RWPE1 (cell line): ENCODE measurements at regions of chr7 and their contacts with region 1.

Region 1: DNA sequence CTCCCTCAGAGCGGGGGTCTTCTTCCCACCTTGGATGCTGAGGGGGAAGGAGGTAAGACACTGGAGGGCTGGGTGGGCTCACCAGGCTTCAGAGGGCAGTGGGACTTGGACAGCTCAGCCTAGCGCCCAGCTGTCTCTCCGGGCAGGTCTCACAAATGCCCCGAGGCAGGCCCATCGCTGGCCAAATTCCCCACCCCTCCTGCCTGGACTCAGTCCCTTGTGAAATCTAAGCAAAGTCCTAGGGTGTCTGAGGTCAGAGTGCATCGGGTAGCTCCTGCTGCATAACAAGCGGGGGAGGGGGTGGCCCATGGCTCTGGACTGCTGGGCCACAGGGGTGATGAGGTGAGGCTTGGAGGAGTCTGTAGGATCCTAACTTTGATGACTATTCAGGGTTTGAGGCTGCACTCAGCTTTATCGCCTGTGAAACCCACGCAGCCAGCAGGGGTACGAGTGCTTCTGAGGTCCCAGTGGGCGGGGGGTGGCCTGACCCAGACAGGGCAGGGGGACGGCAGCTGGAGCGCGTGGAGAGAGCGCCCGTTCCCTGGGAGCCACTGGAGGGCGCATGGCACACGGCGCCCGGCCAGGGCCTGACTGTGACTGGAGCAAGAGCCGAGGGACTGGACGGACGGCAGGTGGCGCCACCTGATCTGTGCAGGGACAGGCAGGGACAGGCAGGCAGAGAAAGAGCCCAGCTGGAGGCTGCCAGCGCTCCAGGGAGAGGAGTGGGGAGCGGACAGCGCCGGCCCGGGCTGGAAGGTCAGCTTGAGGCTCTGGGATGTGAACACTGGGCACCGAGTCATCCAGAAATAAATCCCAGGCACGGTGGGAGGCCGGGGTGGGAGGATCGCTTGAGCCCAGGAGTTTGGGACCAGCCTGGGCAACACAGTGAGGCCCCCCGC is 10.0 kb downstream of the CYP2W1 start:
- DNase-seq: peak; percentile 85
- H3K27ac ChIP-seq: peak overlapping the region; percentile 31; the same call in 1 of the 2 replicates
- CTCF ChIP-seq: peak; percentile 100

Region 2: DNA sequence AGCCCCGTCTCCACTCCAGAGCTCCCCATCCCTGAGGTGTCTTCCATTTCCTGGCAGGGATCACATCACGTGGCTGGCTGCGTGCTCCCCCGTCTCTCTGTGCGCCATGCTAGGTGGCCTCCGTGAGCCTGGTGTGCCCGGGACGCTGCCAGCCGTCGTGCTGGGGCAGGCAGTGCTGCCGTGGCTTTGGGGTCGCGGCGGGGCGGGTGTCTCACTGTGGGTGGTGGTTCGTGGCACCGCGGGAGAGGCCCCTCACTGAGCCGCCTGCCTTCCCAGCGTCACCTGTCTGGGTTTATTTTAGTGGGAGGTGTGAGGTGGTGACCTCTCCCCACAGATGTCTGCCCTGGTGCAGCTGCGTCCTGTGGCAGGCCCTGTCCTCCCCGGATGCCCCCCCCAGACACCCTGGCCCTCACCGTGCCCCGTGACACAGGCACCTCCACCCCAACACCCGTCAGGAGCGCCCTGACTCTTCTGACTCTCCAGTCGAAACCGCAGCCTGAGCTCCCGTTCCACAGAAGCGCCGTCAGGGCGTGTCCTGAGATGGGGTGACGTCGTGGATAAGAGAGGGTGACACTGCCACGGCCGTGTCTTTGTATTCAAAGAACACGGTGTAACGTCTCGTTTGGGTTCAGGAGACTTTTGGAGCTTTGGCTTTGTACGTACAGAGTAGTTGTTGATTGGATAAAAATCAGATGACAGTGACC is 98.6 kb before region 1 on chr7:
- CTCF ChIA-PET with region 1: no interaction called
- POLR2A ChIA-PET with region 1: no interaction called
- DNase-seq: no peak
- H3K27ac ChIP-seq: peak overlapping the region; percentile 4
- CTCF ChIP-seq: no peak

Region 3: DNA sequence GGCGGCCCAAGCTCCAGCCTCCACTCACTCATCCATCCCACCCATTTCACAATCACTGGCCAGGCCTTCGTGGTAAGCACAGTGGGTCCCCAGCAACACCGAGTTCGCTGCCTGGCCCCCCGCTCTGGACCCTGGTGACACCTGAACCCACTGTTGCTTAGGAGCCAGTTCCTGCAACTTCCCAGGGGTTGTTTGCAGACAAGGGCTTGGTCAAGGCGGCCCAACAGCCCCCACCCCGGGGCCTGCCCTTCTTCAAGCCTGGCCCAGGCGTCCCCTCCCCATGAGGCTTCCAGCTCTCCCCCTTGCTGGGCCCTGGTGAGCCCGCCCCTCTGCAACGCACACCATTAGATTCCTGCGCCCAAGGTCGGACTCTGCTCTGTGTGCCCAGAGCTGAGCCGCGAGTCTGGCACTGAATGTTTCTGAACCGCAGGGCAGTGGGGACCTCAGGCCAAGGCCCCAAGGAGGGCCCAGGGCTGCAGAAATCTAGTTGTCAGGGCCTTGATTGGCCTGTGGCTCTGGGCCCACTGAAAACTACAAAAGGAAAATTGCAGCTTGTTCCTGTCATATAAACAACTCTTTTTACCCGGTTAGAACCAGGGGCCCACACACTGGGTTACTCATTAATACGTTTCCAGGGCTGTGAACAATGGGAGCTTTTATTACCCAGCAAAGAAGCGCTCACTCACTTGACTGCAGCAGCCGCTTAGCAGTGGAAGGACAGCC is 15.5 kb before region 1 on chr7:
- CTCF ChIA-PET with region 1: interaction called, 15 read pairs
- POLR2A ChIA-PET with region 1: no interaction called
- DNase-seq: no peak
- H3K27ac ChIP-seq: no peak overlapping the region
- CTCF ChIP-seq: no peak

Region 4: GRCh38 chr7:1059200-1060091 is 66.5 kb after region 1 on chr7:
- CTCF ChIA-PET with region 1: interaction called, 80 read pairs
- POLR2A ChIA-PET with region 1: interaction called, 3 read pairs
- DNase-seq: no peak
- H3K27ac ChIP-seq: peak overlapping the region; percentile 49
- CTCF ChIP-seq: no peak

Region 5: GRCh38 chr7:1076181-1077072 is 83.5 kb after region 1 on chr7:
- CTCF ChIA-PET with region 1: interaction called, 10 read pairs
- POLR2A ChIA-PET with region 1: no interaction called
- DNase-seq: no peak
- H3K27ac ChIP-seq: peak overlapping the region; percentile 83
- CTCF ChIP-seq: no peak

Region 6: GRCh38 chr7:1144269-1144771 is 151.4 kb after region 1 on chr7:
- CTCF ChIA-PET with region 1: interaction called, 34 read pairs
- POLR2A ChIA-PET with region 1: no interaction called
- DNase-seq: peak; percentile 49
- H3K27ac ChIP-seq: no peak overlapping the region
- CTCF ChIP-seq: peak; percentile 68

Region 7: GRCh38 chr7:1175967-1176851 is 183.3 kb after region 1 on chr7:
- CTCF ChIA-PET with region 1: interaction called, 31 read pairs
- POLR2A ChIA-PET with region 1: no interaction called
- DNase-seq: peak; percentile 71
- H3K27ac ChIP-seq: peak overlapping the region; percentile 44
- CTCF ChIP-seq: peak; percentile 96